HepG2 (cell line): ENCODE measurements at regions of chr6 and their contacts with region 1.

Region 1: GRCh38 chr6:117840541-117840983 is 66.5 kb upstream of the SLC35F1 start:
- DNase-seq: peak; percentile 68
- ATAC-seq: peak; percentile 76
- H3K4me3 ChIP-seq: no peak overlapping the region
- H3K27ac ChIP-seq: no peak overlapping the region
- H3K4me1 ChIP-seq: no peaks in the 10 kb centered on the region
- H3K27me3 ChIP-seq: no peaks in the 10 kb centered on the region
- CTCF ChIP-seq: peak; percentile 55
- EP300 ChIP-seq: no peak
- POLR2A ChIP-seq: no peak
- RAD21 ChIP-seq: no peak; the same call in 1 of the 2 replicates

Region 2: DNA sequence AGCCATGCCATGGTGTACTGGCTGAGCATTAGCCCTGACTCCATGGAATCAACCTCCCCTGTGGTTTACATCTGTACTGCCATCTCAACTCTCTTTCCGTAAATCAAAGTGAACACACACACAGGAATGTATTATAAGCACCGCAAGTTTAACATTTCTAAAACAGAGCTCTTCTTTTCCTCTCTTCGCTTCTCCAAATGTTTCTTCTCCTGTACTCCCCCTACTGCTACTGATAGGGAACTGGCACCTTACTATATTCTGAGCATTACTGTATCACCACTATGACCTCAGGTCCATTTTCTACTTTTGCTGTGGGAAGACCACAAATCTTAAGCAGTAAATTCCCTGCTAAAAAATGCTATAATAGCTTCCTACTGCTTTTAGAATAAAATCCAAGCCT is 64.1 kb before region 1 on chr6:
- CTCF ChIA-PET with region 1: no interaction called
- POLR2A ChIA-PET with region 1: no interaction called
- in situ Hi-C with region 1: no loop called
- intact Hi-C with region 1: no loop called
- DNase-seq: peak; percentile 10
- ATAC-seq: peak; percentile 89
- H3K4me3 ChIP-seq: no peak overlapping the region
- H3K27ac ChIP-seq: no peak overlapping the region
- H3K4me1 ChIP-seq: no peaks in the 10 kb centered on the region
- H3K27me3 ChIP-seq: peaks cover 0 to 4% of the 10 kb centered on the region in 2 experiments; a peak in 2 of 5 replicates
- CTCF ChIP-seq: peak; percentile 20; the same call in 1 of the 2 replicates
- EP300 ChIP-seq: no peak
- POLR2A ChIP-seq: no peak
- RAD21 ChIP-seq: no peak

Region 3: GRCh38 chr6:117906853-117907599 is 66.5 kb after region 1 on chr6 and contains the start of gene SLC35F1:
- CTCF ChIA-PET with region 1: no interaction called
- POLR2A ChIA-PET with region 1: no interaction called
- in situ Hi-C with region 1: no loop called
- intact Hi-C with region 1: loop called (anchors 1 kb)
- DNase-seq: peak; percentile 5
- ATAC-seq: peak; percentile 88
- H3K4me3 ChIP-seq: peak within 1 kb of the TSS; percentile 59 to 78 (median 68)
- H3K27ac ChIP-seq: no peak within 1 kb of the TSS
- H3K4me1 ChIP-seq: peaks cover 6% of the 10 kb centered on the region
- H3K27me3 ChIP-seq: peaks cover 6 to 35% of the 10 kb centered on the region in 2 experiments; a peak in 4 of 5 replicates
- CTCF ChIP-seq: peak; percentile 76
- EP300 ChIP-seq: no peak
- POLR2A ChIP-seq: no peak
- RAD21 ChIP-seq: peak; percentile 27; the same call in 1 of the 2 replicates
- total RNA-seq, gene SLC35F1: not detected in 2 replicates

Region 4: DNA sequence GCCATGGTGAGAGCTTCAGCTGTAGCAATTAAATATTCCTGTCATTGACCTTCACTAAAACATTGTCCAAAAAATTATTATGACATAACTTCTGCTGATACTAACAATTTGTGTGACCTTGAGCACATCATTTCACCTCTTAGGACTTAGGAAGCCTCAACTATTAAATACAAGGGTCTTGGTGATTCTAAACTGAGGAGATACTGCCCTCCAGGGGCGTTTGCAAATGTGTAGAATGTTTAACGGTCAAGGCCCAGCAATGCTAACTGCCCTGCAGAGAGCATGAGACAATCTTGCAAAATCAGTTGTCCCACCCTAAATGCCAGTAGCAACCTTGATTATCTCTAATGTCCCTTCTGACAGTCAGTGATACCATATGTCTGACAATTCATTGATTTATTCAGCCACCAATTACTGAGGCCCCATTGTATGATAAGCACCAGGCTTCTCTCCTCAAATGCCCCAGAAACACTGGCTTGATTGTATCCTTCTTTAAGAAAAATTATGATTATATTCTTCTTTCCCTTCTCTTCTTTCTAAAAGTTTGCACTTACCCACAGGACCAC is 423.4 kb after region 1 on chr6:
- CTCF ChIA-PET with region 1: no interaction called
- POLR2A ChIA-PET with region 1: no interaction called
- in situ Hi-C with region 1: no loop called
- intact Hi-C with region 1: loop called (anchors 1 kb)
- DNase-seq: peak; percentile 30
- ATAC-seq: peak; percentile 86
- H3K4me3 ChIP-seq: no peak overlapping the region
- H3K27ac ChIP-seq: no peak overlapping the region
- H3K4me1 ChIP-seq: no peaks in the 10 kb centered on the region
- H3K27me3 ChIP-seq: no peaks in the 10 kb centered on the region
- CTCF ChIP-seq: peak; percentile 44
- EP300 ChIP-seq: no peak
- POLR2A ChIP-seq: no peak
- RAD21 ChIP-seq: no peak

Region 5: GRCh38 chr6:118509009-118509617 is 668.6 kb after region 1 on chr6:
- CTCF ChIA-PET with region 1: interaction called, 5 read pairs
- POLR2A ChIA-PET with region 1: no interaction called
- in situ Hi-C with region 1: no loop called
- intact Hi-C with region 1: loop called (anchors 2 kb)
- DNase-seq: peak; percentile 26
- ATAC-seq: no peak
- H3K4me3 ChIP-seq: no peak overlapping the region
- H3K27ac ChIP-seq: no peak overlapping the region
- H3K4me1 ChIP-seq: no peaks in the 10 kb centered on the region
- H3K27me3 ChIP-seq: no peaks in the 10 kb centered on the region
- CTCF ChIP-seq: peak; percentile 66
- EP300 ChIP-seq: no peak
- POLR2A ChIP-seq: no peak
- RAD21 ChIP-seq: peak; percentile 66

Region 6: DNA sequence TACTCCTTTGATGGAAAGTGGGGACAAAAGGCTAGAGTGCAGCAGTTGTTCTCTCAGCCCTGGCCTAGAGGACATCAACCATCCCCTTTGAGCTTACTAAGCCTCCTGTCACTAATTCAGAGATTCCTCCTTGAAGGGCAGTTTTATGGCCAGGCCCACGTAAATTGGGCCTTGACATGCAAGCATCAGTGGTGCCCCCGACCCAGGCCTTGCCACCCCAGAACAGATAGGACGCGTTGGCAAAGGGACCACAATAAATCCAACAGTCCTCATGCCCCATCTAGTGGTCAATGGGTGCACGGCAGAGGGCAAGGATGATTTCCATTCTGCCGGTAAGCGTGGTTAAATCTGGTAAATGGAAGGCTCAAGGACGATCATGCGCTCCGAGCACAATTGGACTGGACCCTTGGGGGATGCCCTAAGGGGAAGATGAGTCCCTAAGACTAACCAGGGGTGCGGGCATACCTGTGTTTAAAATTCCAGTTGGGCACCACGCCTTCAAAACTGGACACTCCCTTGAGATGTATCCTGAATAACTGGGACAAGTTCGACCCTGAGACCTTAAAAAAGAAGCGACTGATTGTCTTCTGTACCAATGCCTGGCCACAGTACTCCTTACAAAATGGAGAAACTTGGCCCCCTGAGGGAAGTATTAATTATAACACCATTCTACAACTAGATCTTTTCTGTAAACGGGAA is 778.3 kb after region 1 on chr6:
- CTCF ChIA-PET with region 1: interaction called, 3 read pairs
- POLR2A ChIA-PET with region 1: no interaction called
- in situ Hi-C with region 1: no loop called
- intact Hi-C with region 1: loop called (anchors 2 kb)
- DNase-seq: peak; percentile 43
- ATAC-seq: peak; percentile 97
- H3K4me3 ChIP-seq: no peak overlapping the region
- H3K27ac ChIP-seq: no peak overlapping the region
- H3K4me1 ChIP-seq: no peaks in the 10 kb centered on the region
- H3K27me3 ChIP-seq: peaks cover 0 to 13% of the 10 kb centered on the region in 2 experiments; a peak in 2 of 5 replicates
- CTCF ChIP-seq: peak; percentile 95
- EP300 ChIP-seq: no peak
- POLR2A ChIP-seq: no peak
- RAD21 ChIP-seq: peak; percentile 59